GM18951 (cell line): ENCODE measurements at regions of chr18 and their contacts with region 1.

Region 1: GRCh38 chr18:54983041-54983686 is 23.9 kb upstream of the CCDC68 start:
- POLR2A ChIP-seq: no peak

Region 2: GRCh38 chr18:54558609-54559585 is 424.3 kb before region 1 on chr18:
- in situ Hi-C with region 1: loop called (anchors 25 kb)
- POLR2A ChIP-seq: no peak

Region 3: GRCh38 chr18:54679318-54680149 is 303.6 kb before region 1 on chr18:
- in situ Hi-C with region 1: loop called (anchors 25 kb)
- POLR2A ChIP-seq: no peak